ENCODE measurements at regions of chr9 and their contacts with region 1.

Region 1: DNA sequence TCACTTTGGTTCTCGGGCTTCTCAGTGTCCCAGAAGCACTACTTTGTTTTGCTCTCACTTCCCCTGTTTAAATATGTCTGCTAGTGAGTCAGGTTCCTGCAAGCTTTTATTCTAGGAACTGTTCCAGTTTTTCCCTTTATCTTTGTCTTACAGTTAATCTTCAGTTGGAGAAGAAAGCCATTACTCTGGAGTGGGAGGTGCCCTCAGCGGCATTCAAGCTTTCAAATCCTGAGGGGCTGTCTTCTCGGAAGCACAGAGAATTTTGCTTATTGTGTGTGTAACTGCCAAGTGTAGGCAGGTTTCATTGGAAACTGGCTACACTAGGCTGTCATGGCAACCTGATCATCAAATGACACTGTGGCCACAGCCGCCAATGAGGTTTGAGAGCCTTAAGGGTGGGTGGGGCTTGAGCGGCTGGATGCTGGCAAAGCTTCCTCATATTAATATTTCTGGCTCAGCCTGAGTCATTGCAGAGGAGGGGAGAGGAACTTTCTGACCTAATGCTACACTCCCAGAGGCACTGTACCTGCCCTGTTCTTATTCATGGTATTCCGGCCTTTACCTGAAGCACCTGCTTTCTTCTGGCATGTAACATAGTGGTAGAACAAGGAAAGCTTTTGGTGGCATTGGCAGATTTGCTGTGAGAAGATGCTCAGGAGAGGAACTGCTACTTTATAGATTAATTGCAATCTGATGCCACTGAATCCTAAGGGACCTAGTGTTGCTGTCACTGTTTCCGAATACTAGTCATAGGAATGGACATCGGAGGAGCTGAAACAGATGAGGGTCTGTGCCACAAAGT is 26.3 kb downstream of the SLC25A25 start:
- DNase-seq: peak; percentile 93
- H3K4me3 Mint-ChIP-seq: peak overlapping the region; percentile 54
- H3K27ac Mint-ChIP-seq: peak overlapping the region; percentile 96
- H3K4me1 Mint-ChIP-seq: peaks cover 84% of the 10 kb centered on the region
- H3K27me3 Mint-ChIP-seq: no peaks in the 10 kb centered on the region

Region 2: DNA sequence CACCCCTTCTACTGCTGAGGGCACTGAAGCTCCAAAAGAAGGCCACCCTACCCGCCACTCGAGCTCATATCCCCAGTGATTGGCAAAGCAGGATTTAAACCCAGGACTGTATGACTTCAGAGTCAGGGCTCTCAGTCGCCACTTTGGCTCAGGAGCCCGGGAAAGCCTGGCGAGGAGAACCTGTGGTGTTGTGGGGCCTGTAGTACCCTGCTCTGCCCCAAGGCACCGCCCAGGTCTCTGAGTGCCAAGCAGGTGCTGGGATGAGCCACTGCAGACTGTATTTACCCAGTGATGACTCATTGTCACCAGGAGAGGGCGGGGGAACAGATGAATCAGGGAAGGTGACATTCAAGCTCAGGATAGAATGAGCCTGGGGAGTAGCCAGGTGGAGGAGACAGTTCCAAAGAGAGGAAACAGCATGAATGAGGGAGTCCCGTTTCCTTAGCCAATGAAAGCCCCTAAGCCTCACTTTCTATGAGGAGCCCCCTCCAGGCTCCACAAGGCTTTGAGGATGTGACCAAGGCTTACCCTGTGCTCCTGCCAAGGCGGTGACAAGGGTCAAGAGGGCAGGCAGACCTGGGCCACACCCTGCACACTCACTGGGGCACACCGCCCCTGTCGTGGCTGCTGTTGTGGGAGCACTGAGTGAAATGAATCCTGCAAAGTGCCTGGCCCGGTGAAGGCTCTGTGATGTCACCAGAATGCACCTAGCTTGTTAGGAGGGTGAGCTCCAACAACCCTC is 138.9 kb before region 1 on chr9:
- CTCF ChIA-PET with region 1: interaction called, 11 read pairs
- POLR2A ChIA-PET with region 1: no interaction called
- intact Hi-C with region 1: no loop called
- DNase-seq: peak; percentile 95
- H3K4me3 Mint-ChIP-seq: peak overlapping the region; percentile 30
- H3K27ac Mint-ChIP-seq: peak overlapping the region; percentile 92
- H3K4me1 Mint-ChIP-seq: peaks cover 80% of the 10 kb centered on the region
- H3K27me3 Mint-ChIP-seq: no peaks in the 10 kb centered on the region

Region 3: DNA sequence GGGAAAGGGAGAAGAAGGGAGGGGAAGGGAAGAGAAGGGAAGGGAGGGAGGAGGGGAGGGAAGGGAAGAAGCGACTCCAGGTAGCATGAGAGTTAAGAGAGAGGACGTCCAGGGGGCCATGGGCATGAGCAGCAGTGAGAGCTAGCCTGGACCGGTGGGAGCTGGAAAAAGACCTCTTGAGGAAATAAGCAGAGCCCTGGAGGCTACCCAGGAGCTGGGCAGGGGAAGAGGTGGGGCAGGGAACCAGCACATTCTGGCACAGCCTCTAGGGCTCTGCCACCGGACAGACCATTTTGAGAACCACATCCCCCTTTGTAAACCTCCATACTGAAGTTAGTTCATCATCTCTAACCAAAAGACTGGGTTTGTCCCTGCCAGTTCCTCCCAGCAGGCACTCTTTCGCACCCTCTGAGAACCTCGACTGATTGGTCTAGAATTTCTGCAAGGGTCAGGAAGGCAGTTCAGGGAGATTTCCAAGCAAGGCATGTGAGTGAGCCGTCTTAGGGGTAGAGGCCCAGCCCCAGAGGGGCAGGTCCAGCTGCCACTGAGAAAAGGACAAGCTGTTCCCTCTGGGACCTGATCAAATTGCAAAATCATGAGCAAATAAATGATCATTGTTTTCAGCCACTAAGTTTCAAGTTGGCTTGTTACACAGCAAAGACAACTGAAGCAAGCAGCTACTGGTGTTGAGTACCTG is 38.9 kb before region 1 on chr9:
- CTCF ChIA-PET with region 1: no interaction called
- POLR2A ChIA-PET with region 1: no interaction called
- intact Hi-C with region 1: no loop called
- DNase-seq: no peak
- H3K4me3 Mint-ChIP-seq: no peak overlapping the region
- H3K27ac Mint-ChIP-seq: no peak overlapping the region
- H3K4me1 Mint-ChIP-seq: no peaks in the 10 kb centered on the region
- H3K27me3 Mint-ChIP-seq: no peaks in the 10 kb centered on the region

Region 4: GRCh38 chr9:128067876-128068613 is 26.3 kb before region 1 on chr9 and contains the start of gene SLC25A25:
- CTCF ChIA-PET with region 1: interaction called, 5 read pairs
- POLR2A ChIA-PET with region 1: interaction called, 7 read pairs
- intact Hi-C with region 1: loop called (anchors 1 kb)
- DNase-seq: peak; percentile 100
- H3K4me3 Mint-ChIP-seq: peak within 1 kb of the TSS; percentile 96
- H3K27ac Mint-ChIP-seq: peak within 1 kb of the TSS; percentile 91
- H3K4me1 Mint-ChIP-seq: peaks cover 49% of the 10 kb centered on the region
- H3K27me3 Mint-ChIP-seq: no peaks in the 10 kb centered on the region
- total RNA-seq, gene SLC25A25: 17.1 to 17.3 TPM